Aorta (tissue), 5 donors: ENCODE measurements at regions of chr3 and their contacts with region 1.

Region 1: DNA sequence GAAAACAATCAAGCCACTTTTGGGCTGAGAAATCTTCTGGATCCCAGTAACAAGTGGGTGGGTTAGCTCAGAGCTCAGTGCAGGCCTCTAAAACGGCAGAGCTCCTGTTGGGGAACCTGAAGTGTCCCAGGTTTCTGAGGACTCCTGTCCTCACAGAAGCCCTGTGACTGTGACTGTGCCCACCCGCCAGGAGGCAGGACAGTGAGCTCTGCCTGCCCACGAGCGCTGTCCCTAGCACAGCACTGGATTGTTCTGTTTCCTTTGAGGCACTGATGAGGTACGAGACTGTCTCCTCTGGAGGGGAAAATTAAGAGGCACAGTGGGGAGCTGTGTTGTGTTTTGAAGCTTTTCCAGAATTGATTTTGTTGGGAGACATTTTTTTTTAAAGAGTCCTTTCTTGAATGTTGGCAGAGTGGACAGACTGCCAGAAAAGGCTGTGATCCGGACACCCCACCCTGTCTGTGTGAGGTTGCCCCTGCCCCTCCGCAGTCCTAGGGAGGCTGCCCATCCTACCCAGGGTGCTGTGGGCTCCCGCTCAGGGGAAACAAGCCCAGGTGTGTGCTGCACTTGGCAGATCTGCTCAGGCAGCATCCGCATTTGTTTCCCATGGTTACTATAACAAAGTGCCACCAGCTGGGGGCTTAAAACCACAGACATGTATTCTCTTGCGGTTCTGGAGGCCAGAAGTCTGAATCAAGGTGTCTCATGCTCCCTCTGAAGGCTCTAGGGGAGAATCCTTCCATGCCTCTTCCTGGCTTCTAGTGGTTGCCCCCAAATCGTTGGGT is 66.6 kb upstream of the LARS2 start:
- DNase-seq: no peak
- ATAC-seq: no peak
- H3K4me3 ChIP-seq: no peak overlapping the region
- H3K27ac ChIP-seq: no peak overlapping the region
- H3K4me1 ChIP-seq: no peaks in the 10 kb centered on the region
- H3K27me3 ChIP-seq: no peaks in the 10 kb centered on the region

Region 2: GRCh38 chr3:45341876-45342275 is 20.1 kb after region 1 on chr3:
- intact Hi-C with region 1: loop called in 1 of 2 experiments (anchors 1 kb)
- DNase-seq: no peak
- ATAC-seq: no peak
- H3K4me3 ChIP-seq: no peak overlapping the region
- H3K27ac ChIP-seq: no peak overlapping the region
- H3K4me1 ChIP-seq: no peaks in the 10 kb centered on the region
- H3K27me3 ChIP-seq: no peaks in the 10 kb centered on the region

Region 3: DNA sequence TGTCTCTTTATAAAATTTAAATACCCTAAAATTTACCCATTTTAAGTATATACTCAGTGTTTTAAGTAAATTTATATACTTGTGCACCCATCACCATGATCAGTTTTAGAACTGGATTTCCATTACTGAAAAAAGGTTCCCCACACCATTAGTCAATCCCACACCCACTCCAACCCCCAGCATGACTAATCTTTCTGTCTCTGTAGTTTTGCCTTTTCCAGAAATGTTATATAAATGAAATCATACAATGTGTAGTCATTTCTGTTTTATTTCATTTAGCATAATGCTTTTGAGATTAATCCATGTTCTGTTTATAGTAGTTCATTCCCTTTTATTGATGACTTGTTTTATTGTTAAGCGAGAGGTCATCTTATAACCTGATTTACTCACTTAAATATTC is 206.6 kb after region 1 on chr3:
- intact Hi-C with region 1: no loop called
- DNase-seq: no peak
- ATAC-seq: no peak
- H3K4me3 ChIP-seq: no peak overlapping the region
- H3K27ac ChIP-seq: no peak overlapping the region
- H3K4me1 ChIP-seq: no peaks in the 10 kb centered on the region
- H3K27me3 ChIP-seq: no peaks in the 10 kb centered on the region